ENCODE measurements at regions of chr17 and their contacts with region 1.

Region 1: DNA sequence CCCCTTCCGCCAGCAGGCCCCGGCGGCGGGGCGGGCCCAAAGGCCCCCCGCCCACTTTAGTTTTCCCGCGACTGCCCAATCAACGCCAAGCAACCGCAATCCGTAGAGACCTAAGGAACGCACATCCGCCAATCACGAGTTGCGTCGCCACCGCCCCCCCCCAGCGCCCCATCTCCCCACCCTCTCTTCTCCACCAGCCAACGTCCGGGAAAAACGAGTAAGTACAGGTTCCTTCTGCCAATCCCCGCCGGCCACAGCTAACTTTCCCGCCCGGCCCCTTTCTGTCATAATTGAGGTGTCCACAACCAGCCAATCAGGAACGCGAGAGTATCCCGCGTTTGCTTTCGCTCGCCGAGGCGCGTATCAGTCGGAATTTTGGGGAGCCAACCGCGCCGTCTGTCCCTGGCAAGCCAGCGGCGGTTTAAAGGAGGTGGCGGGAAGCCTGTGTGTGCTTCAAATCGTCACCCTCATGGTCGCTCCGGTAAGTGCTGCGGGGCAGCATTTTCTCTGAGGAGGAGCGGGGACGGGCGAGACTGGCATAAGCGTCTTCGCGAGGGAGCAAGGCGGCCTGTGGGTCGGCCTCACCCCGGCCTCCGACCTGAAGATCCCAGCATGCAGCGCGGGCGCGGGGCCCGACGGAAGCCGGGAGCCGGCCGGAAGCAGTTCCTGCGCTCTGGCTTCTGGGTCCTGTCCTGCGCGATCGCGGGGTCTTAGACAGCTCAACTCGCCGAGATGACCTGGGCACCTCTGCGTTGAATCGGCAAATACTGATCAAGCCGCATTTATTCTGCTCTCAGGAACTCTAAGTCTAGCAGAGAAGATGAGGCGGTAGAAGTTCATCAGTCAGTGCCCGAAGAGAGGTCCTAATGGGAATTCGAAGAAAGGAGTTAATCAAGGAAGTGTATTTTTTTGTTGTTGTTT is at the start of gene MIS12:
- DNase-seq: peak; percentile 99
- ATAC-seq: peak; percentile 92
- H3K4me3 Mint-ChIP-seq: peak within 1 kb of the TSS; percentile 99
- H3K27ac Mint-ChIP-seq: peak within 1 kb of the TSS; percentile 99
- H3K4me1 Mint-ChIP-seq: peaks cover 53% of the 10 kb centered on the region
- H3K27me3 Mint-ChIP-seq: no peaks in the 10 kb centered on the region
- total RNA-seq, gene MIS12: 30.8 to 36.4 TPM

Region 2: GRCh38 chr17:5468075-5468473 is 18.4 kb before region 1 on chr17:
- CTCF ChIA-PET with region 1: interaction called, 10 read pairs
- DNase-seq: peak; percentile 43
- ATAC-seq: peak; percentile 18
- H3K4me3 Mint-ChIP-seq: peak overlapping the region; percentile 87
- H3K27ac Mint-ChIP-seq: peak overlapping the region; percentile 68
- H3K4me1 Mint-ChIP-seq: peaks cover 42% of the 10 kb centered on the region
- H3K27me3 Mint-ChIP-seq: no peaks in the 10 kb centered on the region

Region 3: DNA sequence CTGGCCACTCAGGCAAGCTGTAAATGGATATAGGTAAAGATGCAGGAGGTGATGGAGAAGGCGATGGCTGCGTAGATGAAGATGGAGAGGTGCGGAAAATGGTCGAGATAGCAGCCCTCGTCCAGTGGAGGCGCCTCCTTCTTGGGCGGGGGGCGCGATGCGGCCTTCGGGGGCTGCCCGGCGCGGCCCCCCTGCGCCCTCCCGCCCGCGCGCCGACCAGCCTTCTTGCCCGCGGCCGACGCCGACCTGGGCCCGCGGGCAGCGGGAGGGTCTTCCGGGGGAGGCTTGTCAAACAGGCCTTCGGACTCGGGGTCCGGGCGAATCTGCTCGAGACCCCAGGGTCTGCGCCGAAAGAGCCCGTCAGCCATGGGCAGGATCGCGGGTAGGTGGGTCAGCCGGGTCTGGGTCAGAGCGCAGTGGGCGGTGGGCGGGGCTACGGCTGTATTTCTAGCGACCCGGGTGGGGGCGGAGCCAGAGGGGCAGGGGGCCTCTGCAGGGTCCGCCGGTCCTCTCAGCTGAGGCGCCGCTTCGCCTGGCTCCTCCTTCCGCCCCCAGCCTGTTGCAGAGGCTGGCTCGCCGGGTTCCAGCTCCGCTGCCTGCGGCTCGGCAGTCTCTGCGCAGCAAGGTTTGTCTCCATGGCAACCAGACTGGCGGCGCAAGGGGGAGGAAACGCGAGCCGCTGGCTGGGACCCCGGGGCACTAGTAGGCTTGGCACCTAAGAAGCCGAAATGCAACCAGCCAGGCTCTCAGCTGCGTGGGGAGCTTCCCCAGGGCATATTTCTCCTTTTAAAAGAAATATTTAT is 14.3 kb after region 1 on chr17:
- CTCF ChIA-PET with region 1: interaction called, 14 read pairs
- DNase-seq: peak; percentile 86
- ATAC-seq: peak; percentile 93
- H3K4me3 Mint-ChIP-seq: peak overlapping the region; percentile 80
- H3K27ac Mint-ChIP-seq: no peak overlapping the region
- H3K4me1 Mint-ChIP-seq: peaks cover 16% of the 10 kb centered on the region
- H3K27me3 Mint-ChIP-seq: no peaks in the 10 kb centered on the region